Activated naive CD4-positive, alpha-beta T cell treated with anti-CD3 and anti-CD28 coated beads for 36 hours (primary cell): ENCODE measurements at regions of chr6 and their contacts with region 1.

Region 1: GRCh38 chr6:109455502-109456282 is at the start of gene MICAL1:
- DNase-seq: peak; percentile 69
- H3K4me3 Mint-ChIP-seq: peak within 1 kb of the TSS; percentile 91
- H3K27ac Mint-ChIP-seq: peak within 1 kb of the TSS; percentile 82
- H3K4me1 Mint-ChIP-seq: peaks cover 54% of the 10 kb centered on the region
- H3K27me3 Mint-ChIP-seq: no peaks in the 10 kb centered on the region
- total RNA-seq, gene MICAL1: 20.4 to 22.9 TPM

Region 2: GRCh38 chr6:109474995-109475394 is 19.3 kb after region 1 on chr6:
- CTCF ChIA-PET with region 1: interaction called, 5 read pairs
- intact Hi-C with region 1: loop called (anchors 1 kb)
- DNase-seq: no peak
- H3K4me3 Mint-ChIP-seq: no peak overlapping the region
- H3K27ac Mint-ChIP-seq: peak overlapping the region; percentile 78
- H3K4me1 Mint-ChIP-seq: peaks cover 75% of the 10 kb centered on the region
- H3K27me3 Mint-ChIP-seq: no peaks in the 10 kb centered on the region

Region 3: GRCh38 chr6:110398778-110399177 is 943.1 kb after region 1 on chr6:
- CTCF ChIA-PET with region 1: no interaction called
- intact Hi-C with region 1: no loop called
- DNase-seq: no peak
- H3K4me3 Mint-ChIP-seq: no peak overlapping the region
- H3K27ac Mint-ChIP-seq: no peak overlapping the region
- H3K4me1 Mint-ChIP-seq: no peaks in the 10 kb centered on the region
- H3K27me3 Mint-ChIP-seq: peaks cover 7% of the 10 kb centered on the region